CD4-positive, alpha-beta memory T cell (primary cell): ENCODE measurements at regions of chr19 and their contacts with region 1.

Region 1: DNA sequence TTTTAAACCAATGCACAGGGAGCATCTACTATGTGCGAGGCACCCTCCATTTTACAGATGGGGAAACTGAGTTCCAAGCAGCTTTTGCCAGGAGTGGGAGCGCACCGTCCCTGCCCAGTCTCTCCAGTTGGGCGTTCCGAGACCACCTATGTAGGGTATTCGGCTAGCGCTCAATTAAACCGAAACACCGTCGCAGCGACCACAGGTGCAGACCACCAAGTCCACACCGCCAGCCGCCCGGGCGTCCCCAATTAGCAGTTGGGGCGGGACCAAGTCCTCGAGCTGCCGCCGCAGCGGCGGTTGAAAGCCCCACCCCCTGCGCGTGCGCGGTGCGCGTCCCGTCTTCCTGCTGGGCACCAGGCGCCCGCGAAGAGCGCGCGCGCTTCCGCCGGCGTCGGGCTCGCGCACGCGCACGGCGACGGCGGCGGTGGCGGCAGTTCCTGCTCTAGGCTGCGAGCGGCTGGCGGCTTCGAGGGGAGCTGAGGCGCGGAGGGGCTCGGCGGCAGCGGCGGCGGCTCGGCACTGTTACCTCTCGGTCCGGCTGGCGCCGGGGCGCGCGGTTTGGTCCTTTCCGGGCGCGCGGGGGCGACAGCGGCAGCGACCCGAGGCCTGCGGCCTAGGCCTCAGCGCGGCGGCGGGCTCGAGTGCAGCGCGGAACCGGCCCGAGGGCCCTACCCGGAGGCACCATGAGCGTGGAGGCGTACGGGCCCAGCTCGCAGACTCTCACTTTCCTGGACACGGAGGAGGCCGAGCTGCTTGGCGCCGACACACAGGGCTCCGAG is at the start of gene UPF1:
- DNase-seq: peak; percentile 94 to 97 (median 95)
- H3K4me3 ChIP-seq: peak within 1 kb of the TSS; percentile 64 to 85
- H3K4me3 Mint-ChIP-seq: peak within 1 kb of the TSS; percentile 90 to 99 (median 95)
- H3K27ac ChIP-seq: peak within 1 kb of the TSS; percentile 75
- H3K27ac Mint-ChIP-seq: peak within 1 kb of the TSS; percentile 89 to 96 (median 93)
- H3K4me1 ChIP-seq: peaks cover 36% of the 10 kb centered on the region
- H3K4me1 Mint-ChIP-seq: peaks cover 29 to 47% (median 36%) of the 10 kb centered on the region in 4 donors
- H3K27me3 ChIP-seq: no peaks in the 10 kb centered on the region
- H3K27me3 Mint-ChIP-seq: peaks cover 2 to 5% of the 10 kb centered on the region in 2 donors
- total RNA-seq, gene UPF1: 127 to 130 TPM

Region 2: GRCh38 chr19:18594096-18594823 is 237.5 kb before region 1 on chr19:
- CTCF ChIA-PET with region 1: interaction called, 8 read pairs
- POLR2A ChIA-PET with region 1: interaction called, 19 read pairs
- intact Hi-C with region 1: no loop called
- DNase-seq: peak; percentile 69 to 80 (median 75)
- H3K4me3 ChIP-seq: peak overlapping the region; percentile 52 to 57
- H3K4me3 Mint-ChIP-seq: peak overlapping the region; percentile 69 to 85 (median 76)
- H3K27ac ChIP-seq: peak overlapping the region; percentile 50
- H3K27ac Mint-ChIP-seq: peak overlapping the region in 6 of 7 donors; percentile 56 to 91 (median 78)
- H3K4me1 ChIP-seq: peaks cover 32% of the 10 kb centered on the region
- H3K4me1 Mint-ChIP-seq: peaks cover 18 to 36% (median 25%) of the 10 kb centered on the region in 4 donors
- H3K27me3 ChIP-seq: no peaks in the 10 kb centered on the region
- H3K27me3 Mint-ChIP-seq: peaks cover 0 to under 1% of the 10 kb centered on the region in 2 donors

Region 3: GRCh38 chr19:18865973-18866799 is 34.5 kb after region 1 on chr19:
- CTCF ChIA-PET with region 1: no interaction called
- POLR2A ChIA-PET with region 1: no interaction called
- intact Hi-C with region 1: no loop called
- DNase-seq: peak in 4 of 5 donors; percentile 60 to 64 (median 62)
- H3K4me3 ChIP-seq: no peak overlapping the region
- H3K4me3 Mint-ChIP-seq: no peak overlapping the region
- H3K27ac ChIP-seq: no peak overlapping the region
- H3K27ac Mint-ChIP-seq: peak overlapping the region in 2 of 7 donors; percentile 63 to 67
- H3K4me1 ChIP-seq: peaks cover 4% of the 10 kb centered on the region
- H3K4me1 Mint-ChIP-seq: peaks cover 2 to 15% (median 6%) of the 10 kb centered on the region in 4 donors
- H3K27me3 ChIP-seq: no peaks in the 10 kb centered on the region
- H3K27me3 Mint-ChIP-seq: no peaks in the 10 kb centered on the region

Region 4: DNA sequence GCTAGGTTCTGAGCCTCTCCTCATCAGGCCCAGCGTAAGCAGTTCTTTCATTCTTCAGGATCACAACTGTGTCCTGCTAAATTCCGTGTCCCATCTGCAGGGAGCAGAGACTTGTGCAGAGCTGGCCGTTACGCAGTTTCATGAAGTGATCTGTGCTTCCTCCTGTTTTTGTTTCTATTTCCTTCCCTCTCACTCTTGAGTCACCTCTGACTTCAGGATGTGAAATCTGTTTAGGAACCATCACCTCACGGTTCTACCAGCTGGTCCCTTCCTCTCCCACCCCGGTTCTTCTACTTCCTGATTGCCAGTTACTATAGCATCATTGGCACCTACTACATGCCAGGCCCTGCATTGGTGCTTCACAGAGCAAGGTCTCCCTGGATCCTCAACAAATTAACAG is 497.4 kb after region 1 on chr19:
- CTCF ChIA-PET with region 1: no interaction called
- POLR2A ChIA-PET with region 1: no interaction called
- intact Hi-C with region 1: no loop called
- DNase-seq: no peak
- H3K4me3 ChIP-seq: no peak overlapping the region
- H3K4me3 Mint-ChIP-seq: peak overlapping the region in 3 of 8 donors; percentile 6 to 52 (median 28)
- H3K27ac ChIP-seq: no peak overlapping the region
- H3K27ac Mint-ChIP-seq: peak overlapping the region in 6 of 7 donors; percentile 14 to 87 (median 76)
- H3K4me1 ChIP-seq: peaks cover 15% of the 10 kb centered on the region
- H3K4me1 Mint-ChIP-seq: peaks cover 23 to 35% (median 30%) of the 10 kb centered on the region in 4 donors
- H3K27me3 ChIP-seq: no peaks in the 10 kb centered on the region
- H3K27me3 Mint-ChIP-seq: no peaks in the 10 kb centered on the region